ENCODE measurements at regions of chr9 and their contacts with region 1.

Region 1: DNA sequence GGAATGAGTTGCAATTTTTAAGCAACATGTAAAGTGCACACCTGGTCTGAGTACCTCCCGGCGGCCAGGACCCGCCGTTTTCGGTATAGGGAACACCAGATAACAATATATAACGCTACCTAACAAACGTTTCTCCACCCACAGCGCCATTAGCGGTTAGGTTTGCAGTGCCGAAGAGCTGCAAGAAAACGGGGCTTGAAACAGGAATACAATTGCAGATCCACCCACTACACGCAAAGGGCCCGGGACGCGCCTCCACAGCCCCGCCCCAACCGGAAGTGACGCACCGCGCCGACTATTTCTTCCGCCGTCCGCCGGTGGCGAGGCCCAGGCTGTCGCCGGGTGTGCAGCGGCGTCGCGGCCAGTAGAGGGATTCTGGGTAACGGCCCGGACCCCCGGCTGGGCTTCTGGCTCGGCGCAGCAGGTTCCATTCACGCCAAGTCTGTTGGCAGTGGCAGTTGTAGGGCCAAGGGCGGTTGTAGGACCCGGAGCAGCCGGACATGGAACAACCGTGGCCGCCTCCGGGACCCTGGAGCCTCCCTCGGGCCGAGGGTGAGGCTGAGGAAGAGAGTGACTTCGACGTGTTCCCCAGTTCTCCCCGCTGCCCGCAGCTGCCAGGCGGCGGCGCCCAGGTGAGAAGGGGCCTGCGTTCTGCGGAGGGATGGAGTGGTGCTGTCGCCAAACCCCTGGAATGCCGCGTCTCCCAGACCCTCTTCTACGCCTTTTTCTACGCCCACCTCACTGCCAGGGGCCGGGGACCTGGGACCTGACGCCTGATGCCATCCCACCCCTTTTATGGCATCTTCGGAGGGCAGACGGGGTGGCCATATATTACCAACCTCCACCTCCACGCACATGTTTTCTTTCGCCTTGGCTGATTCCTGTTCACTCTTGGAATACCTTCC is at the start of gene CDC37L1:
- DNase-seq: peak; percentile 96 to 100 (median 98)

Region 2: DNA sequence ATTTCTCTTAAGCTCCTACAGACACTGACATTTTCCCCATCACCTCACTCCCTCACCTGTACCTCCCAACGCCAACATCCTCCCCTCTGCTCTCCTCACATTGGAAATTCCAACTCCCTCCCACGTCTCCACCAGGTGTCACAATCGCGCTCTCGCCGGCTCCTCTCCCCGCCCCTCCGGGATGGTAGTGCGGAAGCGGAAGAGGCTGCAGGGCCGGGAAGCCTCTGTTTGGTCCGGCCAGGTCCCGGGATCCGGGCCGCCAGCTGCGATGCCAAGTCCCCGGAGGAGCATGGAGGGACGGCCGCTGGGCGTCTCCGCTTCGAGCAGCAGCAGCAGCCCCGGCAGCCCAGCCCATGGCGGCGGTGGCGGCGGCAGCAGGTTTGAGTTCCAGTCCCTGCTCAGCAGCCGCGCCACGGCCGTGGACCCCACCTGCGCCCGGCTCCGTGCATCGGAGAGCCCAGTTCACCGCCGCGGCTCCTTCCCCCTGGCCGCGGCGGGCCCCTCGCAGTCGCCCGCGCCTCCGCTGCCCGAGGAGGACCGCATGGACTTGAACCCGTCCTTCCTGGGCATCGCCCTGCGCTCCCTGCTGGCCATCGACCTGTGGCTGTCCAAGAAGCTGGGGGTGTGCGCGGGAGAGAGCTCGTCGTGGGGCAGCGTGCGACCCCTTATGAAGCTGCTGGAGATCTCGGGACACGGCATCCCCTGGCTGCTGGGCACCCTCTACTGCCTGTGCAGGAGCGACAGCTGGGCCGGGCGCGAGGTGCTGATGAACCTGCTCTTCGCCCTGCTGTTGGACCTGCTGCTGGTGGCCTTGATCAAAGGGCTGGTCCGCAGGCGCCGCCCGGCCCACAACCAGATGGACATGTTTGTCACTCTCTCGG is 17.2 kb before region 1 on chr9 and contains the start of gene PLPP6:
- intact Hi-C with region 1: loop called (anchors 2 kb)
- DNase-seq: peak; percentile 74 to 97 (median 83)

Region 3: DNA sequence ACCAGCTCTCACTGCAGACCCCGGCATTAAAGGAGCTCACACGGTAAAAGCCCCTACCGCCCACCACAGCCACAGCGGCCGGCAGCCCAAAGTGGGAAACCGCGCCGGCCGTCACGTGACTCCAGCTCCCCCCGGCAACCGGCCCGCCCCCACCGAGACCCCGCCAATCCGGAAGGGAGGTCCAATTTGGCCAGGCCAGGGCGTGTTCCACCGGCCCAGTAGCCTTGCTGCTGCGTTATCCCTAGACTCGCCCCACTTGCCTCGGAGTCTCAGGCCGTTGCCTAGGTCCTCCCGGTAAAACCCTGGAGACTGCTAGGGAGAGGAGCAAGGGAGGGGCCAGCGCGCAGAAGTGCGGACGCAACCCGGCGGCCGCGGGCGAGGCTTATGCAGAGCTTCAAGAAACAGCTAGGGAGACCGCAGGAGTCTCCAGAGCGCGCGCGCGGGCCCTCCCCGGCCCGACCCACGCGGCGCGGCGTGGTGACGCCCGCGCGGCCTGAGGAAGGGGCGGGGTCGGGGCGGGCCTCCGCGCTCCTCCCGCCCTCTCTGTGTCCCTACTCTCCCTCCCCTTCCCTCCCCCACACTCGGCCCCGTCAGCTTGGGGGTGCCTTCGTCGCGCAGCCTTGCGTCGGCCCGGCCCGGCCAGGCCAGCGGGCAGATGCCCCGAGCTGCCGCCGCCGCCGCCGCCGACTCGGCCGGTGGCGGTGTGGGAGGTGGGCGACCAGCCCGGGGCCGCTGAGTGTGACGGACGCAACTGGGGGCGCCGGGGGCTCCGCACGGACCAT is 949.2 kb after region 1 on chr9 and contains the start of gene RIC1:
- intact Hi-C with region 1: loop called (anchors 10 kb)
- DNase-seq: peak; percentile 81 to 98 (median 88)

Measured in posterior cingulate gyrus (tissue), 11 donors.